ENCODE measurements at regions of chr20 and their contacts with region 1.

Region 1: DNA sequence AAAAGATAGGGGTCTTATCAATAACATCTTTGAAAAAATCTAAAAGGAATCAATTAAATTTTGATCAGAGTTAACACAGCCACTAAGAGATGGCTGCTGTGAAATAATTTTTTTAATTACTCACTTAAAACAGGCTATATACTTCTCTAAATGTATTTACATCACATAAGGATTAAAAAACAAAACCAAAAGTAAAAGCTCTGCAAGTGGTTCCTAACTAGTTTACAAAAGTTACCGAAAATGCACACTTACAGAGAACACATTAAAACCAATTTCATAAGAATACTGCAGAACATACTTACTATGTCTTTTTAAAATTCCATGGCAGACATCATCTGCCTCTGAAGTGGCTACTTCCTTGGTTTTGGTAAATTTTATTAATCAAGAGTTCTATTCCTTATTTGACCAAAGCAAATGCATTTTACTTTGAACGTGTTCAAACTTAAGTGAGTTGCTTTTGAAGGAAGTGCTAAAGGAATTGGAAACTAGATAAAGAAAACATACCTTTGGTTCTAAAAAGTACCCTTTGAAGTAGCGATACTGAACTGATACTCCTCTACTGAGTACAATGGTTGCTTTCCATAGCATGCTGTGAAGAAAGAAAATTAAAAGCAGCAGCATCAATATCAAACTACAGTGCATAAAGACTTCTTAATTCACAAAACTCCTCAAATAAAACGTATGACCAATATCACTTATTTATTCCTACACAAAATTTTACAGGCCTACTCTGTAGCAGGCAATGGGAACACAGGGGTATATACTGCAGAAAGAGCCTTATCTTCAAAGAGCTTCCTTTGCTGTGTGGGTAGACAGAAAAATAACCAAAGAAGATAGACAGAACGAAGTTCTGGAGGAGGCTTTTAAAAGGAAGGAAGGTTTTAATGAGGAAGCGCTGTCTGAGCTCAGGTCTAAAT is 157.1 kb upstream of the SHLD1 start:
- DNase-seq: peak in 1 of 10 donors; percentile 37
- ATAC-seq: peak; percentile 78 to 80
- H3K4me3 Mint-ChIP-seq: peak overlapping the region; percentile 33 to 80 (median 70)
- H3K27ac Mint-ChIP-seq: peak overlapping the region; percentile 22 to 93 (median 90)
- H3K4me1 Mint-ChIP-seq: peaks cover 20 to 69% (median 55%) of the 10 kb centered on the region in 4 donors
- H3K27me3 Mint-ChIP-seq: no peaks in the 10 kb centered on the region

Region 2: DNA sequence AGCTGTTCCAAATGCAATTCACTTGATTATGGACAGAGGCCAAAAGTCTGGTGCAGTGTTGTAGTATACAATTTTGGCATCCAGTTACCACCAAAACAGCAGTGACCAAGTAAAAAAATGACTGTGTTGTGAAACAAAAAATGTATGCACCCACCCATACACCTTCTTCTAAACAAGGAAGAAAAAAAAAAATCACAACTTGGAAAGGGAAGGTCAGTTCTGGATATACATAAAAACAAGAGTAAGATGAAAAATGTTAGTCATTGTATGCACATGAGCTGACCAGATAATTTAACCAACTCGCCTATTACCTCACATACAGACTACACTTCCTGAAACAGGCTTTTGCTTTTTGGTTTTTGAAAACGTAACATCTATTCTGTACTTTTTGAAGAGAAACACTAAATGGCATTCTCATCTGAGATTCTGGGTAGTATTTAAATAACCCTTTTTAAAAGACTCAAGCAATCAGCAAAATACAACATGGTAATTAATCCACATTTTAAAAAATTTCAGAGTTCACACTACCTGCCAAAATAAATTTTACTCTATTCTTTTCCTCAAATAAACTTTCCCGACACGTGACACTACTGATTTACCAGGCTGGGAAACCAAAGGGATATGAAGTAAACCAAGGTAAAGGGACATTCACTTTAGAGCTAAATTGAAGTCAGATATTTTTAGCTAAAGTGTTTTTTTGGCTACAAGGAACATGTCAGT is 15.5 kb after region 1 on chr20:
- POLR2A ChIA-PET with region 1: interaction called, 12 read pairs
- DNase-seq: peak in 1 of 10 donors; percentile 25
- ATAC-seq: no peak
- H3K4me3 Mint-ChIP-seq: peak overlapping the region; percentile 89 to 99 (median 98)
- H3K27ac Mint-ChIP-seq: peak overlapping the region; percentile 64 to 100 (median 100)
- H3K4me1 Mint-ChIP-seq: peaks cover 29 to 67% (median 58%) of the 10 kb centered on the region in 4 donors
- H3K27me3 Mint-ChIP-seq: no peaks in the 10 kb centered on the region